GM10248 (cell line): ENCODE measurements at regions of chr12 and their contacts with region 1.

Region 1: DNA sequence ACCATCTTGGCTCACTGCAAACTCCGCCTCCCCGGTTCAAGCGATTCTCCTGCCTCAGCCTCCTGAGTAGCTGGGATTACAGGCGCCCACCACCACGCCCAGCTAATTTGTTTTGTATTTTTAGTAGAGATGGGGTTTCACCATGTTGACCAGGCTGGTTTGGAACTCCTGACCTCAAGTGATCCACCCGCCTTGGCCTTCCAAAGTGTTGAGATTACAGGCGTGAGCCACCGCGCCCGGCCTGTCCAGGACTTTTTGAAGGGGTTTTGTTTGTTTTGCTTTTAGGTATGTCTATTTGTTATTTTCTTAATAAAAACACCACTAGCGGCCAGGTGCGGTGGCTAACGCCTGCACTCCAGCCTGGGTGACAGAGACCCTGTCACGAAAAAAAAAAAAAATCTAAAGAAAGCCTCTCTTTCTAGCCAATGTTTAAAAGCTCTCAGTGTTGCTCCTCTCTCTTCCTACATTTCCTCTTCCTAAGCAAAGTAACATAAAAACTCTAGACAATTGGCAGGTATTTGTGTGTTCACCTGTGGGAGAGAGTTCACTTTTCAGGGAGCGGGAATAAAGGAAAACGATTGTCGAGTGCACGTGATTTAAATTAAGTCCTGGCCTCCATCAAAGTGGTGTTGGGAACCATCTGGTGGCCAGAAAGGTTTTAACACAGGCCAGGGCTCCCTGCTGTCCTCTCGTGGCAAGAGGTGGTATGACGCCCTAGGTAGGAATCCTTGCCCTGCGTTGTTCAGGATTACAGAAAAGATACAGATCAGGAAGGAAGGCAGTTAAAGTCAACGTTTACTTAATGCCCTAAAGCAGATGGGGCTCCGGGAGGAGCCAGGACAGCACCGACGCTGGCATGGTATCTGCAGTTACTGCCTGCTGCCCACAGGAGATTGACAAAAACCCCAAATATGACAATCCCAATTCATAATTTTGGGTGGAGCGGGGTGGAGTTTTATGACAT is 36.2 kb upstream of the ATP23 start:
- DNase-seq: peak; percentile 81
- CTCF ChIP-seq: peak; percentile 100

Region 2: GRCh38 chr12:57687862-57688261 is 217.3 kb before region 1 on chr12:
- CTCF ChIA-PET with region 1: no interaction called
- POLR2A ChIA-PET with region 1: no interaction called
- DNase-seq: no peak
- CTCF ChIP-seq: no peak

Region 3: GRCh38 chr12:57782608-57783465 is 122.3 kb before region 1 on chr12 and contains the start of gene TSFM:
- CTCF ChIA-PET with region 1: interaction called, 14 read pairs
- POLR2A ChIA-PET with region 1: no interaction called
- DNase-seq: peak; percentile 90
- CTCF ChIP-seq: peak; percentile 94

Region 4: GRCh38 chr12:57815177-57816000 is 89.7 kb before region 1 on chr12:
- CTCF ChIA-PET with region 1: interaction called, 23 read pairs
- POLR2A ChIA-PET with region 1: no interaction called
- DNase-seq: no peak
- CTCF ChIP-seq: no peak

Region 5: GRCh38 chr12:57836442-57837375 is 68.4 kb before region 1 on chr12:
- CTCF ChIA-PET with region 1: interaction called, 279 read pairs
- POLR2A ChIA-PET with region 1: no interaction called
- DNase-seq: peak; percentile 63
- CTCF ChIP-seq: no peak

Region 6: DNA sequence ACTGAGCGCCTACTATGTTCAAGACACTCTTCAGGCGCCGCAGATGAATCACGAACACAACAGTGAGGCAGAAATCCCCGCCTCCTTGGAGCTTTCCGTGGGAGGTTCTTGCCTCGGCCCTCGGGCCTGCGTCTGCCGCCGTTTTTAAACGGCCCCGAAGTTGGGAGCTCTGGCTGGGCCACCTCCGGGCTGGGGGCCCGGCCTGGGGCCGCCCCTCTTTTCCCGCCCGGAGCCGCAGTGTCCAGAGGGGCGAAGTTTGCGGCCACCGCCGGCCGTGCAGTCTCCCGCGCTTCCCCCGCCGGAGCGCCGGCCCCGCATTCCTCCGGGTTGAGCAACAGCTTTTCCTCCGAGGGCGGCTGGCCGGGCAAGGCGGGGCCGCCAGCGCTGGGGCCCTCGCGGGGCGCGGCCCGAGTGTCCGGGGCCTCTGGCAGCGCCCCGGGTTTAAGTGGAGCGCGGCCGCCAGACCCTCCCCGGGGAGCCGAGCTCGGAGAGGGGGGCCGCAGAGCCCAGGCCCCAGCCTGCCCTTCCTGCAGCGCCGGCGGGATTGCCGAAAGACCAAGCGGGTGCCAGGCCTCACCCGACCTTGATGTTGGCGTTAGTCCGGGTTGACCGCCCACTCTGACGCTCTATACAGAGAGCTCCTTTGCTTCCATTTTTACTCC is 39.9 kb before region 1 on chr12:
- CTCF ChIA-PET with region 1: interaction called, 12 read pairs
- POLR2A ChIA-PET with region 1: no interaction called
- DNase-seq: peak; percentile 69
- CTCF ChIP-seq: no peak